HCT116 (cell line): ENCODE measurements at regions of chr12 and their contacts with region 1.

Region 1: GRCh38 chr12:96590970-96591369 is 101.6 kb downstream of the CFAP54 start:
- DNase-seq: no peak
- ATAC-seq: no peak
- H3K4me3 ChIP-seq: no peak overlapping the region
- H3K27ac ChIP-seq: no peak overlapping the region
- H3K4me1 ChIP-seq: no peaks in the 10 kb centered on the region
- H3K27me3 ChIP-seq: peaks cover 43% of the 10 kb centered on the region
- CTCF ChIP-seq: no peak
- POLR2A ChIP-seq: no peak
- RAD21 ChIP-seq: no peak

Region 2: DNA sequence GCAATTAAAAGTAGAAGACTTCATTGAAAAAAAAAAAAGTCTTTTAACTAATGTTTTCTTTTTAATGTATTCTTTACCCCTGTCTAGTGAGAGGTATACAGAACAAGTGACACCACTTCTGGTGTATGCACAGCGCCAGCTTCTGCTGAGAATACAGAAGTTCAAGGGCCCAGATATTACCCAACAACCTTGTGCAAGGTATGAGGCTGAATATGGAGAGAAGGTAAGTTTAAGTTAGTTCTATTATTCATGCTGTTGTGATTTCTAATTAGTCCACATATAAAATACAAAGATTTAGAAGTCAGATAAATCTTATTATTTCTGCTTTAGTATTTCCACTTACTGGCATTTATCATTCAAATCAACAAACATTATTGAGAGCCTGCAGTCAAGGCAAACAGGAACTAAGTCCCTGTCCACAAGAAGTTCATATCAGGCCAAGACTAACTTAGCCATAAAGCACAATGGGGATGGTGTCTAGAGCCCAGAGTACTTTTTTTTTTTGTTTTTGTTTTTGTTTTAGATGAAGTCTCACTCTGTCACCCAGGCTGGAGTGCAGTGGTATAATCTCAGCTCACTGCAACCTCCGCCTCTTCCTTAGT is 67.3 kb after region 1 on chr12:
- CTCF ChIA-PET with region 1: no interaction called
- POLR2A ChIA-PET with region 1: no interaction called
- RAD21 ChIA-PET with region 1: no interaction called
- intact Hi-C with region 1: loop called (anchors 2 kb)
- DNase-seq: no peak
- ATAC-seq: peak; percentile 57; the same call in 1 of the 2 replicates
- H3K4me3 ChIP-seq: no peak overlapping the region
- H3K27ac ChIP-seq: no peak overlapping the region
- H3K4me1 ChIP-seq: no peaks in the 10 kb centered on the region
- H3K27me3 ChIP-seq: peaks cover 17% of the 10 kb centered on the region
- CTCF ChIP-seq: 0 out of 6 replicates have a peak, but pooled peaks of 1 of the 3 experiments have one; percentile 6
- POLR2A ChIP-seq: no peak
- RAD21 ChIP-seq: peak; percentile 30

Region 3: GRCh38 chr12:96766232-96766631 is 175.3 kb after region 1 on chr12:
- CTCF ChIA-PET with region 1: no interaction called
- POLR2A ChIA-PET with region 1: no interaction called
- RAD21 ChIA-PET with region 1: no interaction called
- intact Hi-C with region 1: no loop called
- DNase-seq: no peak
- ATAC-seq: peak; percentile 62; the same call in 1 of the 2 replicates
- H3K4me3 ChIP-seq: no peak overlapping the region
- H3K27ac ChIP-seq: no peak overlapping the region
- H3K4me1 ChIP-seq: no peaks in the 10 kb centered on the region
- H3K27me3 ChIP-seq: peaks cover 11% of the 10 kb centered on the region
- CTCF ChIP-seq: peak in 2 of 3 experiments; percentile 19 to 32; a peak in 2 of 6 replicates
- POLR2A ChIP-seq: no peak
- RAD21 ChIP-seq: peak; percentile 28